ENCODE measurements at regions of chr2 and their contacts with region 1.

Region 1: GRCh38 chr2:230781130-230781797 is 68.6 kb downstream of the CAB39 start:
- DNase-seq: peak; percentile 80 to 98
- H3K4me3 ChIP-seq: peak overlapping the region; percentile 32; the same call in 1 of the 2 replicates
- H3K27ac ChIP-seq: peak overlapping the region; percentile 91
- H3K4me1 ChIP-seq: peaks cover 63% of the 10 kb centered on the region
- H3K27me3 ChIP-seq: no peaks in the 10 kb centered on the region
- CTCF ChIP-seq: no peak

Region 2: GRCh38 chr2:230712443-230713330 is 68.6 kb before region 1 on chr2 and contains the start of gene CAB39:
- CTCF ChIA-PET with region 1: no interaction called
- POLR2A ChIA-PET with region 1: interaction called, 13 read pairs
- intact Hi-C with region 1: loop called (anchors 1 kb)
- DNase-seq: peak; percentile 73 to 90
- H3K4me3 ChIP-seq: peak within 1 kb of the TSS; percentile 87
- H3K27ac ChIP-seq: peak within 1 kb of the TSS; percentile 84
- H3K4me1 ChIP-seq: peaks cover 42% of the 10 kb centered on the region
- H3K27me3 ChIP-seq: no peaks in the 10 kb centered on the region
- CTCF ChIP-seq: peak; percentile 64; the same call in 1 of the 2 replicates
- total RNA-seq, gene CAB39: 70.9 and 86.1 TPM in 2 replicates

Region 3: GRCh38 chr2:230738391-230738811 is 42.9 kb before region 1 on chr2:
- CTCF ChIA-PET with region 1: no interaction called
- POLR2A ChIA-PET with region 1: interaction called, 11 read pairs
- intact Hi-C with region 1: loop called (anchors 5 kb)
- DNase-seq: no peak
- H3K4me3 ChIP-seq: peak overlapping the region; percentile 22; the same call in 1 of the 2 replicates
- H3K27ac ChIP-seq: peak overlapping the region; percentile 94
- H3K4me1 ChIP-seq: peaks cover 56% of the 10 kb centered on the region
- H3K27me3 ChIP-seq: no peaks in the 10 kb centered on the region
- CTCF ChIP-seq: no peak

Region 4: GRCh38 chr2:230793572-230794359 is 12.5 kb after region 1 on chr2:
- CTCF ChIA-PET with region 1: interaction called, 4 read pairs
- POLR2A ChIA-PET with region 1: interaction called, 13 read pairs
- intact Hi-C with region 1: loop called (anchors 1 kb)
- DNase-seq: peak; percentile 68 to 93
- H3K4me3 ChIP-seq: peak overlapping the region; percentile 27; the same call in 1 of the 2 replicates
- H3K27ac ChIP-seq: peak overlapping the region; percentile 85
- H3K4me1 ChIP-seq: peaks cover 59% of the 10 kb centered on the region
- H3K27me3 ChIP-seq: no peaks in the 10 kb centered on the region
- CTCF ChIP-seq: no peak

Region 5: GRCh38 chr2:231477763-231478162 is 696.5 kb after region 1 on chr2:
- CTCF ChIA-PET with region 1: no interaction called
- POLR2A ChIA-PET with region 1: interaction called, 27 read pairs
- intact Hi-C with region 1: no loop called
- DNase-seq: no peak
- H3K4me3 ChIP-seq: no peak overlapping the region
- H3K27ac ChIP-seq: no peak overlapping the region
- H3K4me1 ChIP-seq: no peaks in the 10 kb centered on the region
- H3K27me3 ChIP-seq: no peaks in the 10 kb centered on the region
- CTCF ChIP-seq: no peak